HepG2 (cell line): ENCODE measurements at regions of chr7 and their contacts with region 1.

Region 1: DNA sequence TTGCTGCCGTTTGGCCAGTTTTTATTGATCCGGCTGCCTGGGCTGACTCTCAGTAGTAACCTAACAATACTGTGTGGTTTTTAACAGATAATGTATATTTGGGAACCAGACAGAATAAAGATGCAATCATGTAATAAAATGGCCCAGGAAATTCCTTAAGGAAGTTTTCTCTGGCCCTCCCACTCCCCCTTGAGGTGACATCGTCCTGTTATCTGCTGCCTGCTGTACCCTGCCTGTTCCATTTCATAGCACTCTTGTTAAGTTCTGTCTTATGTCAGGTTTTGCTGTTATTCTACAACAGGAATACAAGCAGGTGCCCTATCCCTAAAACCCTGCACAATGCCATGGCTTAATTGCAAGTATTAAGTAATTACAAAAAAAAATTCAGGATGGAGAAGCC is 12.5 kb downstream of the ITGB8 start:
- DNase-seq: no peak
- ATAC-seq: no peak
- H3K4me3 ChIP-seq: no peak overlapping the region
- H3K27ac ChIP-seq: no peak overlapping the region
- H3K4me1 ChIP-seq: no peaks in the 10 kb centered on the region
- H3K27me3 ChIP-seq: no peaks in the 10 kb centered on the region
- CTCF ChIP-seq: 0 out of 2 replicates have a peak, but pooled peaks have one; percentile 5
- EP300 ChIP-seq: no peak
- POLR2A ChIP-seq: no peak
- RAD21 ChIP-seq: no peak

Region 2: GRCh38 chr7:20407585-20408461 is 64.6 kb after region 1 on chr7:
- CTCF ChIA-PET with region 1: no interaction called
- POLR2A ChIA-PET with region 1: no interaction called
- in situ Hi-C with region 1: no loop called
- intact Hi-C with region 1: loop called (anchors 10 kb)
- DNase-seq: no peak
- ATAC-seq: no peak
- H3K4me3 ChIP-seq: no peak overlapping the region
- H3K27ac ChIP-seq: no peak overlapping the region
- H3K4me1 ChIP-seq: no peaks in the 10 kb centered on the region
- H3K27me3 ChIP-seq: no peaks in the 10 kb centered on the region
- CTCF ChIP-seq: no peak
- EP300 ChIP-seq: no peak
- POLR2A ChIP-seq: no peak
- RAD21 ChIP-seq: no peak